ENCODE measurements at regions of chr1 and their contacts with region 1.

Region 1: DNA sequence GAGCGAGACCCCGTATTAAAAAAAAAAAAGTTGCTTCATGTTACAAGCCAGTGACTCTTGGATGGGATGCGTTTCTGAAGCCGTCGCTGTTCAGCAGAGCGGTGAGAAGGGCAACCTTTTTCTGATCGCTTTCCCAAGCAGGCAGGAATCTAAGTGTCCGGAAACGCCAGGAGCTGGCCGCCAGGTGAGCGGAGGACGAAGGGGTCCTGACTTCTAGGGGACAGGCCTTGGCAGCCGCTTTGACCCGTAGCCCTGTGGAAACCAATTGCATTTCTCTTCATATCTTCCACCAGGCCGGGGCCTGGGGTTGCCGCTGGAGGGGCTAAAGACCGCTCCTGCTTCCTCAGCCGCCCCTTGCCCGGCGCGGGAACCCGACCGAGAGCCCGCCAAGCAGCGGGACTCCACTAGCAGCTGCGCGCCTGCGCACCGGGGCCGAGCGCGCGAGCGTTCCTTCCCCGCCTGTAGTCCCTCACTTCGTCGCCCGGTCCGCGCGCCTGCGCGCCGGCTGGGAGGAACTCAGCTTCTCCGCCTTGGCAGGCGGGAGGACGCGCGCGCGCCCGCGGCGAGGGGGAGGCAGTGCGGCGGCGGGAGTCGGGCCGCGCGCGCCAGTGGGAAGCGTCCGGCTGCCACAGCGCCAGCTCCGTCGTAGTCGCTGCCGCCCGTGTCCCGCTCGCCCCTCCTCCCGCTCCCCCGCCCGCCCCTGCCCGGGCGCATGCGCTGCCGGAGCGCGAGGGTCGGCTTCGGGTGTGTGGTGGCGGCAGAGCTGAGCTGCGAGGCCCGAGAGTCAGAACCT is at the start of gene SPEN:
- DNase-seq: peak; percentile 97 to 99 (median 98)
- H3K4me3 ChIP-seq: peak within 1 kb of the TSS; percentile 93
- H3K27ac ChIP-seq: peak within 1 kb of the TSS; percentile 97 to 99
- H3K4me1 ChIP-seq: peaks cover 4% of the 10 kb centered on the region
- H3K27me3 ChIP-seq: no peaks in the 10 kb centered on the region
- CTCF ChIP-seq: peak in 1 of 3 donors; percentile 50
- EP300 ChIP-seq: no peak
- POLR2A ChIP-seq: peak; percentile 53
- total RNA-seq, gene SPEN: 38.0 to 93.2 (median 65.6) TPM

Region 2: DNA sequence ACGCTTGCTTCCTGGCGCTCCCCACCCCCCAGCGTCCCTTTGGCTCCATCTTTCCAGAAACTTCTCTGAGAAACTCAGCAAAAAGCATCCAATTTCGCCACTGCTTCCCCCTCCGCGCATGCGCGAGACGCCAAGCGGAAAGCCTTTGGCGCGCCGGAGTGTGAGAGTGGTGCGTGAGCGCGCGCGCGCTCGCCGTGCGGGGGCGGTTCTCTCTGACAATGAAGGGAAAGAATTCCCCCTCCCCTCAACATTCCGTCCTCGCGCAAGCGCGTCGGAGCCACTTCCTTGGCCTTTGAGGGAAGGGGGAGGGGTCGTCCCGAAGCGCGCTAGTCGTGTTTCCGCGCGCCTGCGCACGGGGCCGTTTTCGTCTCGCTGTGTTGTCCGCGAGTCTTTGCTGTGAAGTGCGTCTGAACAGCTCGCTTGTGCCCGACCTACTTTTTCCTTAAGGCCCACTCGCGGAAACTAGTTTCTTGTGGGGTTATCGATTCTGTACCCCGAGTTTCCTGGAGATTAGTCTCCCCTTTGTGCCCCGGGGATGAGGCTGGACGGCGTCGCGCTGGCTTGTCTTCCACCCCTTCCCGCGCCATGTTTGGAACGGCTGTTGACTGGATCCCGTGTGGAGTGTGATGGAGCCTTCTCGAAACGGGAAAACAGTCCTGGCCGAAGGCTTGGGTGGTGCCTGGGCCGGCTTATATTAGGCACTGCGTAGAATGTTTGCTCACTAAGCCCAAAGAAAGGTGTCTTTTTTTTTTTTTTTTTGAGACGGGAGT is 11.4 kb before region 1 on chr1:
- intact Hi-C with region 1: loop called in 1 of 4 experiments (anchors 2 kb)
- DNase-seq: peak; percentile 100
- H3K4me3 ChIP-seq: peak overlapping the region; percentile 53
- H3K27ac ChIP-seq: peak overlapping the region; percentile 99 to 100
- H3K4me1 ChIP-seq: no peaks in the 10 kb centered on the region
- H3K27me3 ChIP-seq: no peaks in the 10 kb centered on the region
- CTCF ChIP-seq: no peak
- EP300 ChIP-seq: peak; percentile 94
- POLR2A ChIP-seq: peak; percentile 82

Region 3: DNA sequence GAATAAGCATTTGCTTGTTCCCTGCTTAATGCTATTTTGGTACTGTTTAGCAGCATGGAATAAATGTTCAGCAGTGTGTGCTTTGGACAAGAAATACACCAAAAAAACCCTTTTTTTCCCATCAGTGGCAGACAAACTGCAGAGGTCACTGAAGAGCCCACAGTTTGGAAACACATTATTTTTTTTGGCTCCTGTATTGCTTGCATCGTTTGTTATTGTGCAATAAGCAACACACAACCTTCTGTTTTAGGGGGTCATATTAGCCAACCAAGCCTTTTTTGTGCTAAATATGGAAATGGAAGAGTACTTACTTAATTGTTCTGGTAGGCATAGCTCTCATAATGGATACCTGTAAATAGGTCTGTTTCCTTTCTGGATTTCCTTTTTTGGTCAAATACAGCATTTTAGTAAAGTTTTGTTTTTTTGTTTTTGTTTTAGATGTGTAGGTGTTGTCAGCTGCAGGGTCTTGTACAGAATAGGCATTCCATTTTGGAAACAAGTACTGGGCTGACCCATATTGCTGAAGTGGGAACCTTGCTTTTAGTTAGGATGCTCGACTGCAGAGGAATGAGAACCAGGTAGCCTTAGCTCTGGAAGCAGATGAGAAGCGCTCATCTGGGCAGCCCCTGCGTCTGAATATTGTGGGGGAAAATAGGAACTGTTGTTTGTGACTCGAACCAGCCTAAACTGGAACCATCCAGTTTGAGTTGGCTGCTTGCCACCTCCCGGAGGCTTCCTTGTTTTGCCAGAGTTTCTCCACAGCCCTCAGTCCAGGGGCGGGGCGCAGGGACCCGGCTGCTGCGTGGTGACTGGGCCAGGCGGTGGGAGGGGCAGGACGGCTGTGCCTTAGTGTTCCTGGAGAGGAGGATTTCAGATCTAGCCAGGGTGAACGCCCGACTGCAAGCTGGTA is 38.7 kb after region 1 on chr1:
- intact Hi-C with region 1: loop called in 2 of 4 experiments (anchors 2 to 5 kb)
- DNase-seq: peak; percentile 99
- H3K4me3 ChIP-seq: peak overlapping the region; percentile 42
- H3K27ac ChIP-seq: peak overlapping the region; percentile 82 to 96
- H3K4me1 ChIP-seq: peaks cover 7% of the 10 kb centered on the region
- H3K27me3 ChIP-seq: no peaks in the 10 kb centered on the region
- CTCF ChIP-seq: peak in 2 of 3 donors; percentile 53 to 57
- EP300 ChIP-seq: peak; percentile 92
- POLR2A ChIP-seq: peak; percentile 53

Region 4: GRCh38 chr1:15949453-15950245 is 102.4 kb after region 1 on chr1:
- intact Hi-C with region 1: loop called in 1 of 4 experiments (anchors 10 kb)
- DNase-seq: peak; percentile 97 to 99 (median 97)
- H3K4me3 ChIP-seq: peak overlapping the region; percentile 31
- H3K27ac ChIP-seq: peak overlapping the region; percentile 90 to 99
- H3K4me1 ChIP-seq: peaks cover 36% of the 10 kb centered on the region
- H3K27me3 ChIP-seq: no peaks in the 10 kb centered on the region
- CTCF ChIP-seq: no peak
- EP300 ChIP-seq: peak; percentile 72
- POLR2A ChIP-seq: peak; percentile 71

Region 5: GRCh38 chr1:16226490-16227179 is 379.3 kb after region 1 on chr1:
- intact Hi-C with region 1: no loop called
- DNase-seq: peak; percentile 82 to 93 (median 85)
- H3K4me3 ChIP-seq: peak overlapping the region; percentile 9
- H3K27ac ChIP-seq: no peak overlapping the region
- H3K4me1 ChIP-seq: peaks cover 4% of the 10 kb centered on the region
- H3K27me3 ChIP-seq: no peaks in the 10 kb centered on the region
- CTCF ChIP-seq: no peak
- EP300 ChIP-seq: no peak
- POLR2A ChIP-seq: peak; percentile 5